ENCODE measurements at regions of chr11 and their contacts with region 1.

Region 1: GRCh38 chr11:15893080-15893492 is 463.3 kb downstream of the SOX6 start:
- DNase-seq: no peak
- ATAC-seq: no peak
- H3K4me3 ChIP-seq: no peak overlapping the region
- H3K27ac ChIP-seq: no peak overlapping the region
- H3K4me1 ChIP-seq: no peaks in the 10 kb centered on the region
- H3K27me3 ChIP-seq: peaks cover 0 to 18% of the 10 kb centered on the region in 2 experiments; a peak in 3 of 5 replicates
- CTCF ChIP-seq: no peak
- EP300 ChIP-seq: no peak
- POLR2A ChIP-seq: no peak
- RAD21 ChIP-seq: no peak

Region 2: DNA sequence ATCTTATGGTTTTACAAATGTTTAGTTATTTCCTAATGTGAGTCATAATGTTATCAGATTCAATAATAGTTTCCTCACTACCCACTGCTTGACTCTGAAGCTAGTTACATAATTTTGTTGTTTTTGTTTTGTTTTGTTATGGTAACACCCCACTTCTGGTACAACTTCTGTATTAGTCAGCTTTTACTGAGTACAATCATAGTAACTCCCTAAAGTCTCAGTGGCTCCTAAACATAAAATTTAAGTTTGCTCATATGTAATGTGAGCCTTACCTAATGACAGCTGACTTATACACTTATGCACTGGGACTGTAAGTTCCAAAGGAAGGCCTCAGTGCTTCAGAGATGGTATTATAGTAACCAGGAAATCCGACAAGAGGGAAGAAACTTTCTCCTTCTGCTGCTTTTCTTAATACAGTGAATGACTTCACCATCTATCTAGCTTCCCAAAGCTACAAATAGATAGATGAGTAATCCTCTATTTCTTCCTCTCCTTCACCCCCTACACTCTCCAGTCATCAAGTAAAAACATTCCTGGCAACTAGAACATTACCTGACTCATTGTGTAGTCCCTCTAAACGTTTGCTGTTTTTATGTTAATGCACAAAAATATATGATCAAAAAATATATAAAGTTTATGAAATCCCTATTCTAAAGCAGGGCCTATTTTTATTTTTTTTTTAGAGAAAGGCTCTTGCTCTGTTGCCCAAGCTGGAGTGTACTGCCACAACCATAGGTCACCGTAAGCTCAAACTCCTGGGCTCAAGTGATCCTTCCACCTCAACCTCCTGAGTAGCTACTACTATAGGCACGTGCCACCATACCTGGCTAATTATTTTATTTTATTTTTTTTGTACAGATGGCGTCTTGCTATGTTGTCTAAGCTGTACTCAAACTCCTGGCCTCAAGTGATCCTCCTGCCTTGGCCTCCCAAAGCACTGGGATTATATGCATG is 99.8 kb before region 1 on chr11:
- CTCF ChIA-PET with region 1: no interaction called
- POLR2A ChIA-PET with region 1: no interaction called
- in situ Hi-C with region 1: loop called (anchors 25 kb)
- intact Hi-C with region 1: no loop called
- DNase-seq: no peak
- ATAC-seq: no peak
- H3K4me3 ChIP-seq: no peak overlapping the region
- H3K27ac ChIP-seq: no peak overlapping the region
- H3K4me1 ChIP-seq: no peaks in the 10 kb centered on the region
- H3K27me3 ChIP-seq: no peaks in the 10 kb centered on the region
- CTCF ChIP-seq: no peak
- EP300 ChIP-seq: no peak
- POLR2A ChIP-seq: no peak
- RAD21 ChIP-seq: no peak

Region 3: DNA sequence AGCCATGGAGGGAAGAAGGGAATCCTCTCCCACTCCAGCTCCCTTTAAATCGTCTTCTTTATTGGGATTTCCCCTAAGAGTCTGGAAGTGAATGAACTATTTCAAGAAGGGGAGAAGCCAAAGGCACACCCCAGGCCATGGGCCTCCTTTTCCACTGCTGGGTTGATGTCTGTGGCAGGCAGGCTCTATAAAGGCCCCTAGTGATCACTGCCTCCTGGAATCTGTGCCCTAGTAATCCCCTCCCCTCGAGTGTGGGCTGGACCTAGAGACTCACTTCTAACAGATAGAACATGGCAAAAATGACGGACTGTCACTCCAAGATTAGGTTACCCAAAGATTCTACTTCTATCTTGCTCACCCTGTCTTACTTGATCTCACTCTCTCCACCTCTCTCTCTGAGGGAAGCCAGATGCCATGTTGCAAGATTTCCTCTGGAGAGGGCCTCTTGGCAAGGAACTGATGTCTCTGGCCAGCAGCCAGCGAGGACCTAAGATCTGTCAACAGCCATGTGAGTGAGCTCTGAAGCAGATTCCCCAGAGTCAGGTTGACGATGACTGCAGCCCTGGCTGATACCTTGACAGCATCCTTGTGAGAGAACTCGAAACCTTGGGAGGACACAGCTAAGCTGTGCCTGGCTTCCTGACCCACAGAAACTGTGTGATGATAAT is 18.4 kb after region 1 on chr11:
- CTCF ChIA-PET with region 1: no interaction called
- POLR2A ChIA-PET with region 1: no interaction called
- in situ Hi-C with region 1: no loop called
- intact Hi-C with region 1: no loop called
- DNase-seq: no peak
- ATAC-seq: no peak
- H3K4me3 ChIP-seq: no peak overlapping the region
- H3K27ac ChIP-seq: no peak overlapping the region
- H3K4me1 ChIP-seq: no peaks in the 10 kb centered on the region
- H3K27me3 ChIP-seq: peaks cover 0 to 10% of the 10 kb centered on the region in 2 experiments; a peak in 1 of 5 replicates
- CTCF ChIP-seq: no peak
- EP300 ChIP-seq: no peak
- POLR2A ChIP-seq: no peak
- RAD21 ChIP-seq: no peak

Measured in HepG2 (cell line).